ENCODE measurements at regions of chr5 and their contacts with region 1.

Region 1: GRCh38 chr5:96868603-96869371 is 7.5 kb upstream of the ERAP2 start:
- DNase-seq: no peak
- ATAC-seq: peak; percentile 95
- H3K4me3 Mint-ChIP-seq: no peak overlapping the region
- H3K27ac Mint-ChIP-seq: no peak overlapping the region
- H3K4me1 Mint-ChIP-seq: peaks cover 27% of the 10 kb centered on the region
- H3K27me3 Mint-ChIP-seq: no peaks in the 10 kb centered on the region
- CTCF ChIP-seq: peak; percentile 61; the same call in 1 of the 2 replicates

Region 2: GRCh38 chr5:96702503-96703383 is 166.0 kb before region 1 on chr5:
- CTCF ChIA-PET with region 1: no interaction called
- POLR2A ChIA-PET with region 1: no interaction called
- DNase-seq: peak; percentile 71
- ATAC-seq: peak; percentile 85
- H3K4me3 Mint-ChIP-seq: peak overlapping the region; percentile 89
- H3K27ac Mint-ChIP-seq: peak overlapping the region; percentile 85
- H3K4me1 Mint-ChIP-seq: peaks cover 25% of the 10 kb centered on the region
- H3K27me3 Mint-ChIP-seq: peaks cover 8% of the 10 kb centered on the region; the same call in 1 of the 2 replicates
- CTCF ChIP-seq: no peak

Region 3: GRCh38 chr5:96752341-96753016 is 116.3 kb before region 1 on chr5:
- CTCF ChIA-PET with region 1: interaction called, 19 read pairs
- POLR2A ChIA-PET with region 1: no interaction called
- DNase-seq: no peak
- ATAC-seq: no peak
- H3K4me3 Mint-ChIP-seq: no peak overlapping the region
- H3K27ac Mint-ChIP-seq: no peak overlapping the region
- H3K4me1 Mint-ChIP-seq: no peaks in the 10 kb centered on the region
- H3K27me3 Mint-ChIP-seq: no peaks in the 10 kb centered on the region
- CTCF ChIP-seq: peak; percentile 37

Region 4: GRCh38 chr5:96901384-96901783 is 32.6 kb after region 1 on chr5:
- CTCF ChIA-PET with region 1: interaction called, 19 read pairs
- POLR2A ChIA-PET with region 1: no interaction called
- DNase-seq: no peak
- ATAC-seq: peak; percentile 95
- H3K4me3 Mint-ChIP-seq: no peak overlapping the region
- H3K27ac Mint-ChIP-seq: no peak overlapping the region
- H3K4me1 Mint-ChIP-seq: no peaks in the 10 kb centered on the region
- H3K27me3 Mint-ChIP-seq: no peaks in the 10 kb centered on the region
- CTCF ChIP-seq: no peak

Region 5: GRCh38 chr5:96997265-96997859 is 128.6 kb after region 1 on chr5:
- CTCF ChIA-PET with region 1: interaction called, 11 read pairs
- POLR2A ChIA-PET with region 1: no interaction called
- DNase-seq: no peak
- ATAC-seq: peak; percentile 47; the same call in 1 of the 2 replicates
- H3K4me3 Mint-ChIP-seq: no peak overlapping the region
- H3K27ac Mint-ChIP-seq: no peak overlapping the region
- H3K4me1 Mint-ChIP-seq: peaks cover 4% of the 10 kb centered on the region; the same call in 1 of the 2 replicates
- H3K27me3 Mint-ChIP-seq: no peaks in the 10 kb centered on the region
- CTCF ChIP-seq: no peak; the same call in none of the 2 replicates

Region 6: DNA sequence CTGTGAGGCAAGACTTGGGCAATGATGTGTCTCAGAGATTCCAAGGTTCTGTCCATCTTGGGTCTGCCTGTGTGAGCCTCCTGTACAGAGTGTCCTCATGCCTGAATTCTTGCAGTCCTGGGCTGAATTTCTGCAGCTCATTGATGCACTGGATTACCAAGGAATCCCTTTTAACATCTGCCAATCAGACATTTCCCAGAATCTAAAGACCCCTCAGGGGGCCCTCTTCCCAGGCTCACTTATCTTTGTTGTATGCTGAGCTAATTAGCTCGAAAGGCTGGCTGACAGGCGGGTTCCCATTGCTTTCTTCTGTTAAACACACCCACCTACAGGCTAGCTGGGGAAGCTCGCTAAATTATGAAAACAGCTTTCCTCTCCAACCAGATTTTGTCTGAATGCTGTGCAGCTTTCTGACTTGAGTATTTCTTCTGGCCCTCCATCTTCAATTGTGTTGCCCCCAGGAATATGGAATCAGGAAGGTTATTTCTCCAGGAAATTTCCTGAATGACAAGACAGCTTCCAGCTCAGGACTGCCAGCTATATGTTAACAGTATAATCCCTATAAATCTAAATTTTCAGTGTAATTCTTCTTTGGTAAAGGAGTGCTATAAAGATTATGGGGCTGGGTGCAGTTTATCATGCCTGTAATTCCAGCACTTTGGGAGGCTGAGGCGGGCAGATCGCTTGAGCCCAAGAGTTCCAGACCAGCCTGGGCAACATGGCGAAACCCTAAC is 273.9 kb after region 1 on chr5 and contains the start of gene LIX1:
- CTCF ChIA-PET with region 1: interaction called, 48 read pairs
- POLR2A ChIA-PET with region 1: no interaction called
- DNase-seq: peak; percentile 59
- ATAC-seq: peak; percentile 92
- H3K4me3 Mint-ChIP-seq: no peak within 1 kb of the TSS
- H3K27ac Mint-ChIP-seq: peak within 1 kb of the TSS; percentile 43; the same call in 1 of the 2 replicates
- H3K4me1 Mint-ChIP-seq: peaks cover 28% of the 10 kb centered on the region
- H3K27me3 Mint-ChIP-seq: no peaks in the 10 kb centered on the region
- CTCF ChIP-seq: no peak
- total RNA-seq, gene LIX1: not detected in 3 replicates

Region 7: DNA sequence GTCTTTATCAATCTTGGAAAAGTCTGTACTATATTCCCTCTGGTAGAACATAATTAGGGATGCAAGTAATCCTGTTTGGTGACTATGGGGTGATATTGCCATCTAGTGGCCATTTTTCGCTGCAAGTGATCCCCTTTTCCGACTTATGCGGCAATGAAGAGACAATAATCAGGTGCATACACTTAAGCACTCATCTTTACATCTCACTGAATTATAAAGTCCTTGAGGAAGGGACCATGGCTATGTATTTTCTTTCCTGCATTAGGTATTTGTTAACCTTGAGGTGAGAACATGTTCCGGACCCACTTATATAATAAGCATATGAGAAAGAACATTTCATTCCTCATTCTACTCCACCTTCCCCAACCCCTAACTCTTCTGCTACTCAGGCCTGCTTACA is 293.3 kb after region 1 on chr5:
- CTCF ChIA-PET with region 1: interaction called, 12 read pairs
- POLR2A ChIA-PET with region 1: no interaction called
- DNase-seq: peak; percentile 66
- ATAC-seq: peak; percentile 70
- H3K4me3 Mint-ChIP-seq: no peak overlapping the region
- H3K27ac Mint-ChIP-seq: no peak overlapping the region
- H3K4me1 Mint-ChIP-seq: no peaks in the 10 kb centered on the region
- H3K27me3 Mint-ChIP-seq: no peaks in the 10 kb centered on the region
- CTCF ChIP-seq: peak; percentile 63

Measured in WTC11 (cell line).